Left ventricle myocardium superior (tissue), 1 donor: ENCODE measurements at regions of chr14 and their contacts with region 1.

Region 1: GRCh38 chr14:57486767-57487379 is 6.8 kb downstream of the CCDC198 start:
- DNase-seq: no peak
- ATAC-seq: peak; percentile 45

Region 2: GRCh38 chr14:58072288-58073071 is 585.6 kb after region 1 on chr14:
- intact Hi-C with region 1: loop called (anchors 5 kb)
- DNase-seq: no peak
- ATAC-seq: peak; percentile 70